Activated CD4-positive, alpha-beta T cell treated with anti-CD3 and anti-CD28 coated beads for 36 hours (primary cell): ENCODE measurements at regions of chr3 and their contacts with region 1.

Region 1: DNA sequence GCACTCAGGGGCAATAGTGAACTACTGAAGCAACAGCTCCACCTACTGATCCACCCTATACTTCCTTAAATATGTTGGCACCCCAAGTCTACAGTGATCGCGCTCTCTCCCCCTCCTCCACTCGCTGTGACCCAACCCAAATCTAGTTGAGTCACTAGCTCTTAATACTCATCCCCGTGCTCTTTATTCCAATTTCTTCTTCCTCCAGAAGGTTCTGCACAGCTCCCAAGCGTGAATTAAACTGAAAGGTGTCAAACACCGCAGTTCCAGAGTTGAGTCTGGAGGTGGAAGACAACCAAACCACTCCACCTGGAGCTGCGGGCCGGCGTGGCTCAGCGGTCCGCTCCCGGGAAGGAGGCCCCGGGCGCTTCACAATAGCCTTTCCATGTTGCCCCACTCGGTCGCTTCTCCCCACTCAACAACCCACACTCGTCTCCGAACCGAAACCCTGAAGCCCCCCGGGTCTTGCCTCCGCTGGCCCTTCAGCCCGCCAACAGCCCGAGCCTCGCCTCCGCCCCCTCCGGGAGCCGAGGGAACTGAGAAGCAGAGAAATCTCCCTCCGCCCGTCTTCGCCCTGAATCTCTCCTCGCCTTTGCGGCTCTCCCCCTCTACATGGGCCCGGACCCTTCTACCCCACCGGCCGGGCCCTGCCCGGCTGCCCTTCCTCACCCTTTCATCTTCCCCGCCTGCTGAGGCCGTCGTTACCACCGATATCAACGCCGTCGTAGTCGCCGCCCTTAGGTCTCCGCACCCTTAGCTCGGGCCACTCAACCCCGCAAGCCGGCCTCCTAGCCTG is 578 bp downstream of the NAA50 start:
- DNase-seq: peak; percentile 88
- ATAC-seq: peak; percentile 71
- H3K4me3 Mint-ChIP-seq: peak overlapping the region; percentile 93
- H3K27ac Mint-ChIP-seq: peak overlapping the region; percentile 100
- H3K4me1 Mint-ChIP-seq: peaks cover 66% of the 10 kb centered on the region
- H3K27me3 Mint-ChIP-seq: no peaks in the 10 kb centered on the region

Region 2: DNA sequence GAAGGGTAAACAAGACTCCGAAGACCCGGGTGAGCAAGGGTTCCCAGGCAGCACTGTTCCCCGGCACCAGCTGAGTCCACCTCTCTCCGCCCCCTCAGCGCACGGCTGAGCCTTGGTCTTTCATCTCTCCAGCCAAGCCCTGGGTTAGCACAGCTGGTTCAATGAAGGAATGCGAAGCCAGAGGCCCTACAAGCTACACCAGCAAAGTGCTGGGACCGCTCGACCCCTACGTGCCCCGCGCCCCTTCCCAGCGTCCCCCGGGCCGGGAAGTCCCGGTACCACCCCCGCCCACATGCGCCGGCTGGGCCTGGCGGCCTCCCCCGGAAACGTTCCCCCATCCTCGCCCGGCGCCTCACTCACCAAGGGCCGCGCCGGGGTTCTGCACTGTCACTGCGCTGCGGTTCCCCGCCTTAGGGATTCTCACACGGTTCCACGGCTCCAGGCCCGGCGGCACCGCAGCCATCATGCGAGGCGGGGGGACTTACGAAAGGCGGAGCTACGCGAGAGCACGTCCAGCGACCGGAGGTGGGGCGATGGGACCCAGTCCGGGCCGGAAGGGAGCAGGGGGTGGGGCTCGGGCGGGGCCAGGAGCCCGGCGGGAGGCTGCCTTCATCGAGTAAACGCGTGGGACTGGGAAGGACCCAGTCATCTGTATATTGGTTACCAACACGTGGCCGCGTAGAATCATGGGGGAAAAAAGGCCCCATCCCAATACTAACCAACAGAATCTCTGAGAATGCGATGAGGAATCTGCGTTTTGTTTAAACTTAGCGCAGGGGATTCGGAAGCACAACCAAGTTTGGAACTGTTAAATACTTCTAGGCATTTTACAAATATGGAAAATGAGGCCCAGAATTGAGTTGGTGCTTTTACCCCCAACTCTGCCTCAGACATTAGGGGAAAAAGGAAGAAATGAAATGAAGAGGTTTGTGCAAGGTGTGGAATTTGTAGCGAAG is 726.0 kb before region 1 on chr3:
- CTCF ChIA-PET with region 1: no interaction called
- POLR2A ChIA-PET with region 1: interaction called, 3 read pairs
- intact Hi-C with region 1: loop called (anchors 1 to 5 kb)
- DNase-seq: peak; percentile 96
- ATAC-seq: peak; percentile 90
- H3K4me3 Mint-ChIP-seq: peak overlapping the region; percentile 85
- H3K27ac Mint-ChIP-seq: peak overlapping the region; percentile 94
- H3K4me1 Mint-ChIP-seq: peaks cover 55% of the 10 kb centered on the region
- H3K27me3 Mint-ChIP-seq: no peaks in the 10 kb centered on the region

Region 3: DNA sequence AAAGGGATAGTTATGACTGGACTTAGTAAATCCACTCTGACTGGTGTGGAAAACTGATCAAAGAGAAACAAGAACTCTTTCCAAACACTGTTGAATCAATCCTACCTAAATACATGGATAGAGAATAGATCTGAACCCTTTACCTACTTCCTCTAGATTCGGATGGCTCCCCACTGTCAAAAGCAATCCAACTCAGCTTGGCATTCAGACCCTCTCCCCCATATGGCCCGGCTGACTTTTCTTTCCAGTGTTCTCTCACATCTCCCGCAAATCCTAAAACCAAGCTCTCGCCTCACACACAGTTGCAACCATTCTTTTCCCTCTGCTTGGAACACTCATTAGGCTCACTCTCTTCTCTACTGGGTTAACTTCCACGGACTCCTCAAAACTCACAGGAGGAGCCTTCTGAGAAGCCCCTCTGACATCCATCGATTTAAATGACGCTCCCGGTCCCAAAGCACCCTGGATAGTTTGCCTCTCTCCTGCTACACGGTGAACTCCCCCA is 231.2 kb before region 1 on chr3:
- CTCF ChIA-PET with region 1: no interaction called
- POLR2A ChIA-PET with region 1: interaction called, 4 read pairs
- intact Hi-C with region 1: loop called (anchors 1 kb)
- DNase-seq: no peak
- ATAC-seq: peak; percentile 30
- H3K4me3 Mint-ChIP-seq: no peak overlapping the region
- H3K27ac Mint-ChIP-seq: no peak overlapping the region
- H3K4me1 Mint-ChIP-seq: peaks cover 10% of the 10 kb centered on the region
- H3K27me3 Mint-ChIP-seq: peaks cover 6% of the 10 kb centered on the region

Region 4: GRCh38 chr3:113696658-113697499 is 48.6 kb before region 1 on chr3:
- CTCF ChIA-PET with region 1: interaction called, 9 read pairs
- POLR2A ChIA-PET with region 1: interaction called, 7 read pairs
- intact Hi-C with region 1: loop called (anchors 1 kb)
- DNase-seq: peak; percentile 99
- ATAC-seq: peak; percentile 92
- H3K4me3 Mint-ChIP-seq: no peak overlapping the region
- H3K27ac Mint-ChIP-seq: no peak overlapping the region
- H3K4me1 Mint-ChIP-seq: peaks cover 27% of the 10 kb centered on the region
- H3K27me3 Mint-ChIP-seq: no peaks in the 10 kb centered on the region

Region 5: GRCh38 chr3:113947372-113948014 is 202.0 kb after region 1 on chr3 and contains the start of gene ZDHHC23:
- CTCF ChIA-PET with region 1: no interaction called
- POLR2A ChIA-PET with region 1: no interaction called
- intact Hi-C with region 1: loop called (anchors 2 to 5 kb)
- DNase-seq: peak; percentile 74
- ATAC-seq: peak; percentile 75
- H3K4me3 Mint-ChIP-seq: peak within 1 kb of the TSS; percentile 76
- H3K27ac Mint-ChIP-seq: peak within 1 kb of the TSS; percentile 79
- H3K4me1 Mint-ChIP-seq: peaks cover 11% of the 10 kb centered on the region
- H3K27me3 Mint-ChIP-seq: peaks cover 25% of the 10 kb centered on the region
- total RNA-seq, gene ZDHHC23: 4.5 to 5.1 TPM

Region 6: GRCh38 chr3:115147329-115148141 is 1402.1 kb after region 1 on chr3:
- CTCF ChIA-PET with region 1: no interaction called
- POLR2A ChIA-PET with region 1: no interaction called
- intact Hi-C with region 1: loop called in 1 of 2 experiments (anchors 2 kb)
- DNase-seq: peak; percentile 97
- ATAC-seq: peak; percentile 85
- H3K4me3 Mint-ChIP-seq: peak overlapping the region; percentile 97
- H3K27ac Mint-ChIP-seq: peak overlapping the region; percentile 98
- H3K4me1 Mint-ChIP-seq: peaks cover 21% of the 10 kb centered on the region
- H3K27me3 Mint-ChIP-seq: no peaks in the 10 kb centered on the region